Activated B cell treated with CpG ODN at 0.5 μM for 24 hours (primary cell): ENCODE measurements at regions of chr18 and their contacts with region 1.

Region 1: DNA sequence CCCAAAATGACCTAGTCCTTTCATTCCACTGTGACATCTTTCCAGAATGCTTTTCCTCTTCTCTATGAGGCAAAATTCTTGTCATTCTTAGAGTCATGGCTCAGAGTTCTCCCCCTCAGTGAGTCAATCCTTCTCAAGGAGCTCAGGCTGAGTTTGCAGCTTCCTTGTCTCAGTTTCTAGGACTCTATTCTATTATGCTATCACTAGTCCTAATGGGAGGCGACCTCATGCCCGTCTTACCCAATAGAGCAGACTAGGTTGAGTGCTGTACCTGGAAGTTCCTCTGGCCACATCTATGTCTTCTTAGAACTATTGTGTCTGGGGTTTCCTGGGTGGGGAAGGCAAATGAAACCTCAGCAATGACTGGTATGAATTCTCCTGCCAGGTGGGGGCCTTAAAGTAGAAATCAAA is 51.5 kb downstream of the HAUS1 start:
- DNase-seq: no peak
- ATAC-seq: no peak
- H3K4me3 Mint-ChIP-seq: no peak overlapping the region
- H3K27ac Mint-ChIP-seq: no peak overlapping the region
- H3K4me1 Mint-ChIP-seq: peaks cover 14% of the 10 kb centered on the region
- H3K27me3 Mint-ChIP-seq: no peaks in the 10 kb centered on the region
- CTCF ChIP-seq: no peak

Region 2: GRCh38 chr18:46130061-46130460 is 25.6 kb before region 1 on chr18:
- CTCF ChIA-PET with region 1: no interaction called
- POLR2A ChIA-PET with region 1: no interaction called
- intact Hi-C with region 1: loop called (anchors 1 kb)
- DNase-seq: no peak
- ATAC-seq: no peak
- H3K4me3 Mint-ChIP-seq: no peak overlapping the region
- H3K27ac Mint-ChIP-seq: no peak overlapping the region
- H3K4me1 Mint-ChIP-seq: no peaks in the 10 kb centered on the region
- H3K27me3 Mint-ChIP-seq: no peaks in the 10 kb centered on the region
- CTCF ChIP-seq: no peak